ENCODE measurements at regions of chr14 and their contacts with region 1.

Region 1: GRCh38 chr14:55102141-55102621 is 26.9 kb upstream of the LGALS3 start:
- DNase-seq: peak; percentile 95
- H3K4me3 Mint-ChIP-seq: peak overlapping the region; percentile 81
- H3K27ac Mint-ChIP-seq: peak overlapping the region; percentile 99
- H3K4me1 Mint-ChIP-seq: peaks cover 35% of the 10 kb centered on the region
- H3K27me3 Mint-ChIP-seq: no peaks in the 10 kb centered on the region
- CTCF ChIP-seq: no peak

Region 2: GRCh38 chr14:55062517-55063351 is 39.4 kb before region 1 on chr14:
- CTCF ChIA-PET with region 1: no interaction called
- POLR2A ChIA-PET with region 1: interaction called, 10 read pairs
- intact Hi-C with region 1: no loop called
- DNase-seq: peak; percentile 54
- H3K4me3 Mint-ChIP-seq: no peak overlapping the region
- H3K27ac Mint-ChIP-seq: peak overlapping the region; percentile 46
- H3K4me1 Mint-ChIP-seq: peaks cover 7% of the 10 kb centered on the region
- H3K27me3 Mint-ChIP-seq: no peaks in the 10 kb centered on the region
- CTCF ChIP-seq: no peak

Region 3: DNA sequence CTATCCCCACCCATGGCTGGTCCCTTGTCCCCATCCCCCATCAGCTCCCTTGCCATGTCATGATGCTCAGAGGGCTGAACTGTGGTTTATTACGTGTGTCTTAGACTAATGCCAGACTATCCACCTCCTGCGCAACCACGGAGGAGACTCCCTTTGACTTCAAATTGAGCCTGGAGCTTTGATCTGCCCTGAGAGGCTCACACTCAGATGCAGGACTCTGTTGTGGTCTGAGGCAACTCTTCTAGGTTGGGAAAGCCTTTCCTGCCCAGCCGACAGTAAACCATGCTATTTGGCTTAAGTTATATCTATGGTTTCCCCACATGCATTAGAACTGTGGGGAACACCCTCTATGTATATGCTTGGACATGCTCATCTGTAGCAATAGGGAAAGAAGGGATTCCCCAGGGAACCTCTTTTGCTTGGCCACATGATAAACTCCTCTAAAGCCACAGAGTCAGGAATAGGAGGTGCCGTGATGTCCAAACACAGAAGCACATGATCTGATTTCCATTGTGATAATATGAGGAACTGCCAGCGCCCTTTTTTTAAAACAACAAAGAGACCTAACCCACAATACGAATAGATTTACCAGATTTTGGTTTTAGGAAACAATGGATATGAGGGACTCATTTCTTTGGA is 15.7 kb after region 1 on chr14:
- CTCF ChIA-PET with region 1: interaction called, 9 read pairs
- POLR2A ChIA-PET with region 1: interaction called, 41 read pairs
- intact Hi-C with region 1: no loop called
- DNase-seq: peak; percentile 46
- H3K4me3 Mint-ChIP-seq: no peak overlapping the region
- H3K27ac Mint-ChIP-seq: peak overlapping the region; percentile 72
- H3K4me1 Mint-ChIP-seq: peaks cover 33% of the 10 kb centered on the region
- H3K27me3 Mint-ChIP-seq: no peaks in the 10 kb centered on the region
- CTCF ChIP-seq: no peak

Region 4: DNA sequence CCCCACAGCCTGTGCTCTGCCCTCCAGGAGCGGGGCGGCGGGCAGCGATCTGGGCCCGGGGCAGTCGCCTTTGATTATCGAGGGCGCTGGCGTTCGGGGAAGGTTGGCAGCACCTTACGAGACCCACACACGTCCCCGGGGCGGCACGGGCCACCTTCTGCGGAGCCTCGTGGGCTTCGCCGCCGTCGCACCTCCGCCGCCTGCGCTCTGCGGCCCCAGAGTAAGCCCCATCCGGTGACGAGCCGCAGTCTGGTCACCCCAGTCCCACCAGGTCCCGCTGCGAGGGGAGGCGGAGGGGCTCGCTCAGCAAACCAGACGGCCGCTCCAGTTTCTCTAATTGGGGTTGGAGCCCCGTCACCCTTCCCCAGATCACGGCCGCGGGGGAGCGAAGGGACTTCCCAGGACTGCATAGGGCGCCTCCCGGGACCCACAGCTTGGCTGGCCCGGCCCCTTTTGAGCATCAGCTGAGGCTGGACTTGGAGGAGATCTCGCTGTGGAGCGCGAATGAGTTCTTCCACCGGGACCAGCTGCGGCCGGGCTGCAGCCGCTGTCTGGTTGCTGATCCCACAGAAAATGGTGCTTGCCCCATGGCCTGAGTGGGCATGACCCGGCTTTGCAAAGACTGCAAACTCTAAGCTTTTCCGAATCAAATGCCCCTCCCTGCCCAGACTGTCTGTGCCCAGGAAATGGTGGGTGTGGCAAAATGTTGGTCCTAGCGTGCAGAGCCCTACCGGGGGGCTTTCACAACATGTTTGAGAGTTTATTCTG is 27.4 kb after region 1 on chr14:
- CTCF ChIA-PET with region 1: interaction called, 13 read pairs
- POLR2A ChIA-PET with region 1: interaction called, 385 read pairs
- intact Hi-C with region 1: loop called (anchors 1 kb)
- DNase-seq: peak; percentile 73
- H3K4me3 Mint-ChIP-seq: peak overlapping the region; percentile 90
- H3K27ac Mint-ChIP-seq: peak overlapping the region; percentile 89
- H3K4me1 Mint-ChIP-seq: peaks cover 16% of the 10 kb centered on the region
- H3K27me3 Mint-ChIP-seq: no peaks in the 10 kb centered on the region
- CTCF ChIP-seq: no peak

Region 5: DNA sequence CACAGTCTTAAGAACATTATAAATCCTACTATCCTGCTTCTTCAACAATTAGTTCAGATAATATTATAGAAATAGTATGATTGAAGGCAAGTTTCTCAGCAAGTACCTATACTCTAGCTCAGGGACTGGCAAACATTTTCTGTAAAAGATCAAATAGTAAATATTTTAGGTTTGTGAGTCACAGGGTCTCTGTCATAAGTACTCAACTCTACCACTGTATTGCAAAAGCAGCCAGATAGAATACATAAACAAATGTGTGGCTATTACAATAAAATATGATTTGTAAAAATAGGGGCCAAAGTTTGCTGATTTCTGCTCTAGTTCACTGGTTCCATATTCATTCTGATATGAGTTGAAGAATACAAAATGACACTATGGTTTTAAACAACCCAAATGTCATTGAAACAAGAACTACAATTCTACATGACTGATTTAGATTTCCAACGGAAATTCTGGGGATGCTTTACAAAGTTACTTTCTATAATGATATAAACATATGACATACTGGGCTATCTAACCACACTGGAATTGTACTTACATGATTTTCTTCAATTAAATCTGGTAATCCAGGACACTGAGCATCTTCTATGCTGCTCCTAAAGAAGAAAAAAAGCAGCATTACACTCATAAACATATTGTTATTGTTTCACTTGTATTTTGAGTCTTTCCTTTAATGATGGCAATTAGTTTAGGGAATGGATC is 50.0 kb after region 1 on chr14:
- CTCF ChIA-PET with region 1: interaction called, 3 read pairs
- POLR2A ChIA-PET with region 1: interaction called, 11 read pairs
- intact Hi-C with region 1: no loop called
- DNase-seq: peak; percentile 25
- H3K4me3 Mint-ChIP-seq: no peak overlapping the region
- H3K27ac Mint-ChIP-seq: peak overlapping the region; percentile 74
- H3K4me1 Mint-ChIP-seq: no peaks in the 10 kb centered on the region
- H3K27me3 Mint-ChIP-seq: no peaks in the 10 kb centered on the region
- CTCF ChIP-seq: no peak

Region 6: DNA sequence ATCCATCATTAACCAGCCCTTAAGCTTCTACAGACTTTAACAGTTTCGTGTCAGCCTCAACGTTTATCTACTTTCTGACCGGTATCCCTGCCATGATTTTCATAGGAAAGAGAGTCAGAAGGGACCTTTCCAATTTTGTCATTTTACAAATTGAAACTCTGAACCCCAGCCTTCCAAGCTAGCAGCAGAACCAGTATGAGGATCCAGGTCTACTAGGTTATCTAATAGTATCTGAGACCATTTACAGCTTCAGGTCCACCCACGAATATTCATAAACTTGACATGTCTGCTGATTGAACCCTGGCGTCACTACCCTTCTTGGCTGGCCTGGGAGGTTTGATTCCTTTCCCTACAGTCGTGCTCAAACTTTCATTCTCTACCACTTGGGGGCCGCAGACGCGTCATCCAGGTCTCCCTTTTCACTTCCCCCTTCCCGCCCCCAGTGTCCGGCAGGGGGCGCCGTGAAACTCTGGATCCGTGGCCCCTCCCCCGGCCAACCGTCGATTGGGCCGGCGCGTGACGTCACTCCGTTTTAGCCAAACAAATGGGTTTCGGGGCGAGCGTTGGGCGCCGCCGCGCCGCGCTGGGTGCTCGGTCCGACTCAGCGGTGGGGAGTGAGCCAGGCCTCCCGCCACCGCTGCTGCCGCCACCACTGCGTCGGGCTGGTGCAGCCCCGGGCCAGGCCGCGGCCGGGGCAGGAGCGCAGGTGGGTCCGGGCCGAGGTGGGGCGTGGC is 168.8 kb after region 1 on chr14 and contains the start of gene FBXO34:
- CTCF ChIA-PET with region 1: no interaction called
- POLR2A ChIA-PET with region 1: interaction called, 10 read pairs
- intact Hi-C with region 1: no loop called
- DNase-seq: peak; percentile 99
- H3K4me3 Mint-ChIP-seq: peak within 1 kb of the TSS; percentile 82
- H3K27ac Mint-ChIP-seq: peak within 1 kb of the TSS; percentile 92
- H3K4me1 Mint-ChIP-seq: peaks cover 26% of the 10 kb centered on the region
- H3K27me3 Mint-ChIP-seq: no peaks in the 10 kb centered on the region
- CTCF ChIP-seq: peak; percentile 98
- total RNA-seq, gene FBXO34: 12.0 and 13.7 TPM in 2 replicates

Measured in MCF 10A (cell line).